Sigmoid colon (tissue), 7 donors: ENCODE measurements at regions of chr10 and their contacts with region 1.

Region 1: DNA sequence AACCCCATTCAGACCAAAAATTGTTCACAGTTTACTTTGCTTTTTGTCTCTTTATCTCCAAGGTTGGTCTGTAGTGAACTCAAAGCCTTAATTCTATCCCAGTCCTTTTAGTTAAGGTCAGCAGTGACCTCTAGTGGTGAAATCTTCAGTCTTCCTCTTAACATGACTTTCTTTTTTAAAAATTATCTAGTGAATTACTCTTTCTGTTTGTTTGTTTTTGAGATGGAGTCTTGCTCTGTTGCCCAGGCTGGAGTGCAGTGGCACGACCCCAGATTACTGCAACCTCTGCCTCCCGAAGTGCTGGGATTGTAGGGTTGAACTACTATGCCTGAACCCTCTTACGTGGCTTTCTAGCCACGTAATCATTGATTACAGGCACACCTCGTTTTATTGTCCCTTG is 25.0 kb downstream of the ZNF487 start:
- DNase-seq: no peak
- H3K4me3 ChIP-seq: no peak overlapping the region
- H3K27ac ChIP-seq: no peak overlapping the region
- H3K4me1 ChIP-seq: peaks cover 0 to 5% (median 0%) of the 10 kb centered on the region in 4 donors
- H3K27me3 ChIP-seq: no peaks in the 10 kb centered on the region
- CTCF ChIP-seq: peak; percentile 43 to 63 (median 56)
- EP300 ChIP-seq: no peak
- POLR2A ChIP-seq: no peak

Region 2: GRCh38 chr10:43292755-43293676 is 168.9 kb before region 1 on chr10:
- intact Hi-C with region 1: loop called (anchors 1 kb)
- DNase-seq: peak; percentile 70
- H3K4me3 ChIP-seq: no peak overlapping the region
- H3K27ac ChIP-seq: no peak overlapping the region
- H3K4me1 ChIP-seq: peaks cover 0 to 4% (median 0%) of the 10 kb centered on the region in 4 donors
- H3K27me3 ChIP-seq: peaks cover 0 to 17% (median 0%) of the 10 kb centered on the region in 3 donors
- CTCF ChIP-seq: peak; percentile 30 to 73 (median 62)
- EP300 ChIP-seq: no peak
- POLR2A ChIP-seq: no peak

Region 3: GRCh38 chr10:43524434-43525247 is 62.7 kb after region 1 on chr10:
- intact Hi-C with region 1: no loop called
- DNase-seq: no peak
- H3K4me3 ChIP-seq: no peak overlapping the region
- H3K27ac ChIP-seq: no peak overlapping the region
- H3K4me1 ChIP-seq: no peaks in the 10 kb centered on the region
- H3K27me3 ChIP-seq: no peaks in the 10 kb centered on the region
- CTCF ChIP-seq: no peak
- EP300 ChIP-seq: no peak
- POLR2A ChIP-seq: no peak

Region 4: DNA sequence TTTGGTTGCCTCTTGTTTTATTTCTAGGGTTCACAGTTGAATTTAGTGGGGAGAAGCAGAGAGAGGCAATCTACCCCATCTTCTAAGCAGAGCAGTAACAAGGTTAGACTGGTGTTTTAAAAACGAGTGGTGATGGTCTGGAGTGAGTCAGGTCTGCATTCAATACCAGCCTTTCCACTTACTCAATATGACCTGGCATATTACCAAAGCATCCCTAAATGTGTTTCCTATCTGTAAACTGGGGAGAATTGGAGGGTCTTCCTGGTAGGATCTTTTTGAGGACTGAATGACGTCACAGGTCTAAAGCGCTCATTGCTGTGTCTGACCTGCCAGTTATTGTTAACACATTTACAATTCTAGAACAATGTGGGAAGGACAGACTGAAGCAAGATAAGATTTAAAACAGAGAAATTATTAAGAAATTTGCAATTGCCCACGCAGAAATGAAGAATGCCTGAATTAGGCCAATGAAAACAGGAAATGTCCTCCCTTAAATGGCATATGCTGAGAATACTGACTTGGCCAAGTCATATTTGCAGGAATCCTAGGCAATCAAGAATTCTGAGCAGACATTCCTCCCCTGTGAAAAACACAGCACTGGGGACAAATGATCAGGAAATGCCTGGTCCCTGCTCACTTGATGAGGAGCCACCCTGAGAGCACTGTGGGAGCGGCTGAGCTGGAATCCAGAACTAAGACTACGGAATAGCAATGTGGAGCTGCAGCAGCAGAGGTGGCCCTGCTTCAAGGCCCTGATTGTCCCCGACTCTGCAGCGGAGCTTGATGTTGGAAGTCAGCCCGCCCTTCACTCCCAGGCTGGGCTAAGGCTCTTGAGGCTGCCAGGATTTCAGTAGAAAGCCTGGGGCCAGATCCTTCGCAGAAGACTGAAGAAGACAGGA is 1107.5 kb after region 1 on chr10:
- intact Hi-C with region 1: no loop called
- DNase-seq: no peak
- H3K4me3 ChIP-seq: no peak overlapping the region
- H3K27ac ChIP-seq: peak overlapping the region in 2 of 4 donors; percentile 3 to 11
- H3K4me1 ChIP-seq: no peaks in the 10 kb centered on the region
- H3K27me3 ChIP-seq: no peaks in the 10 kb centered on the region
- CTCF ChIP-seq: no peak
- EP300 ChIP-seq: no peak
- POLR2A ChIP-seq: no peak